Activated naive CD4-positive, alpha-beta T cell treated with anti-CD3 and anti-CD28 coated beads for 36 hours (primary cell): ENCODE measurements at regions of chr7 and their contacts with region 1.

Region 1: DNA sequence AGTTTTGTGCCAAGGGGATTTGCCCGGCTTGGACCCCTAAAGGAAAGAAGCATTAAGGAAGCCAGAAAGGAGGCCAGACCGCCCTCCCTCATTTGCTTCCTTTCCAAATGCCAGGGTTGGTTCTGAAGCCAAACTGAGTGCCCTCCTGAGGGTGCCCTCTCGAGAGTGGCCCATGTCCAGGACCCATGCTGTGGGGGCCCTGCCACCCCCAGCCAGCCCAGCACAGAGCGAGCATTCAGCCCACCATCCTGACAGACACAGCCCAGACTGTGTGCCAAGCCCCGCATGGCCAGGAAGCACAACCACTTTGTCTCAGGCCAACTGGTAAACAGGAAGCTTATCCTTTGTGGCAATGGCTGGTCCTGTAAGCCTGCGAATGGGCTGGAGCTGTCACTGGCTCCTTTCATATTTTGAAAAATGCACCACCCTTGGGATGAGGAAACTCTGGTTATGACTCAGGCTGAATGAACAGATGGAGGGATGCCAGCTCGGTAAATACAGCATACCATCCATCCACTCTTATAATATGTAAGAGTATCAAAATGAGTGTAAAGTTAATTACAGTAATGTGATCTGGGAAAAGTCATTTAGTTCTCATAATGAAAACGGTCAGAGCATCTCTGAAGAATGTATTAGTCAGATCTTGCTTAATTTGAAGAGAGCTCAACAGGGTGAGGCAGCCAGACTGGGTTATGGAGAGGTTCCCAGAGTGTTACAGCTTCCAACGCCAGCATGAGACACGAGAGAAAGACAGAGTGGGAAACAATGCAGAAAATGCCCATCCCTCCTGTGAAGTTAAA is 65.0 kb downstream of the STK17A start:
- DNase-seq: peak; percentile 87
- H3K4me3 Mint-ChIP-seq: peak overlapping the region; percentile 62
- H3K27ac Mint-ChIP-seq: peak overlapping the region; percentile 98
- H3K4me1 Mint-ChIP-seq: peaks cover 94% of the 10 kb centered on the region
- H3K27me3 Mint-ChIP-seq: no peaks in the 10 kb centered on the region

Region 2: DNA sequence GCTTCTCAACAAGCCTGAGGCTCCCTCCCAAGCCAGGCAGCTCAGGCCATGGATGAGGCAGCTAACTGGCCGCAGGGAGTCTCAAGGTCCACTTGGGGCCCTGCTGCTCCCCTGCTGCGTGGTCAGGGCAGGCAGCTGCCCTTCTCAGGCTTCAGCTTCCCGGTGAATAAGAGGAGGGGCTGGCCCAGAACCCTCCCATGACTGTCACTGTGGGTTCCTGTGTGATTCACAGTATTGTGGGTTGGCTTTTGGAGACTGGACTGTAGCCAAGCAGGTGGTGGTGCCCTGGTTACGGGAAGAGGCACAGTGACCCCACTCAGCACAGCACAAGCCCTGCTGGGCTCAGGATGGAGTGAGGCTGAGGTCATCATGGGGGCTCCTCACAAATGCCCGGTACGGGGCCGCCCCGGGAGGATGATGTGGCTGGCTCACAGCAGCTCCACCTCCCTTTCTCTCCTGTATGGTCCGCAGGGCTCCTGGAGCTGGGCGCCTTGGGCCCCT is 345.6 kb before region 1 on chr7:
- CTCF ChIA-PET with region 1: no interaction called
- intact Hi-C with region 1: loop called (anchors 5 kb)
- DNase-seq: peak; percentile 73
- H3K4me3 Mint-ChIP-seq: no peak overlapping the region
- H3K27ac Mint-ChIP-seq: no peak overlapping the region
- H3K4me1 Mint-ChIP-seq: peaks cover 36% of the 10 kb centered on the region
- H3K27me3 Mint-ChIP-seq: no peaks in the 10 kb centered on the region

Region 3: DNA sequence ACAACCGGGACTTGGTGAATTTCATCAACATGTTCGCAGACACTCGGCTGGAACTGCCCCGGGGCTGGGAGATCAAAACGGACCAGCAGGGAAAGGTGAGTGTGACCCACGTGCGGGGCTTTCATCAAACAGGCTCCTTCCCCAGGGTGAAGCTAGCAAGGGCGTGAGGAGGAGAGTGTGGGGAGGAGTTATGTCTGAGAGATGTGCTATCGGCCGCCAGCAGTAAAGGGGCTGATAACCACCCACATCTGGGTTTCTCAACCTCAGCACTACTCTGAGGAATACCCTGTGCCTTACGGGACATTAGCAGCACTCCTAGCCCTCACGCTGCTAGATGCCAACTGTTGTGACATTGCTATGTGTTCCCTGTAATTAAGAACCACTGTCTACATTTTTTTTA is 178.9 kb before region 1 on chr7:
- CTCF ChIA-PET with region 1: no interaction called
- intact Hi-C with region 1: no loop called
- DNase-seq: no peak
- H3K4me3 Mint-ChIP-seq: no peak overlapping the region
- H3K27ac Mint-ChIP-seq: no peak overlapping the region
- H3K4me1 Mint-ChIP-seq: peaks cover 7% of the 10 kb centered on the region
- H3K27me3 Mint-ChIP-seq: no peaks in the 10 kb centered on the region

Region 4: DNA sequence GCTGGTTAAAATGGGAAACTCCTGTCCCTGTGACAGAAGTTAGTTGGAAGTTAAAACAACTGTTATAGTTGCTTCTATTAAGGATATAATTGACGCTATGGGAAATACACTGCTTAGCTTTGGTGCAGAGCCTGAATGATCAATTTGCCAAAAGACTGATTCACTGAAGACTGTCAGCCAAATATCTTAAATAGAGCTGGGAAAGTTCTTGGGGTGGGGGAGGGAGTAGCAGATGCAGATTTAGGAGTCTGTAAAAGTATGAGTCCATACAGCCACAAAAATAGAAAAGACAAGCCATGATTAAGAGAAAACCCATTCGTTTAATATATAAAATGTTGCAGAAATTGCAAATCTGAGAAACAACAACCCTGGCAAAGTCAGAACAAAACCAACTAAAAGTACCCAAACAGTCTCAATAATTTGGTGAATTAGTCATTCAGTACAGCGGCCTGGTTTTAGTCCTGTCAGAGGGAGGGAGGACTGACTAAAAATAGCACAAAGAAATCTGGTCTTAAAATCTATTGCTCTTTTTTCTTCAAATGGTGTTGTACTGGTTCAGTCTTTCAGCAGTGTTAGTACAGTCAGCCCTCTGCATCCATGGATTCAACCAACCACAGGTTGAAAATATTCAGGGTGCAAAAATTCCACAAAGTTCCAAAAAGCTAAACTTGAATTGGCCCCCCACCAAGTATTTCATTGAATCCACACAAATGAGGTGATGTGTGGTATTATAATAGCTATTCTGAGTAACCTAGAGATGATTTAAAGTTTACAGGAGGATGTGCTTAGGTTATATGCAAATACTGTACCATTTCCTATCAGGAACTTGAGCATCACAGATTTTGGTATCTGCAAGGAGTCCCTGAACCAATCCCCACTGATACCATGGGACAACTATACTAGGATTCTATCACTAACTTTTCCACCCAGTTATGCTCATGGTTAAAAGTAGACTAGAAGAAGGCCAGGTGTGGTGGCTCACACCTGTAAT is 35.0 kb before region 1 on chr7:
- CTCF ChIA-PET with region 1: interaction called, 5 read pairs
- intact Hi-C with region 1: loop called (anchors 1 kb)
- DNase-seq: peak; percentile 54
- H3K4me3 Mint-ChIP-seq: peak overlapping the region; percentile 6
- H3K27ac Mint-ChIP-seq: peak overlapping the region; percentile 77
- H3K4me1 Mint-ChIP-seq: peaks cover 72% of the 10 kb centered on the region
- H3K27me3 Mint-ChIP-seq: no peaks in the 10 kb centered on the region

Region 5: DNA sequence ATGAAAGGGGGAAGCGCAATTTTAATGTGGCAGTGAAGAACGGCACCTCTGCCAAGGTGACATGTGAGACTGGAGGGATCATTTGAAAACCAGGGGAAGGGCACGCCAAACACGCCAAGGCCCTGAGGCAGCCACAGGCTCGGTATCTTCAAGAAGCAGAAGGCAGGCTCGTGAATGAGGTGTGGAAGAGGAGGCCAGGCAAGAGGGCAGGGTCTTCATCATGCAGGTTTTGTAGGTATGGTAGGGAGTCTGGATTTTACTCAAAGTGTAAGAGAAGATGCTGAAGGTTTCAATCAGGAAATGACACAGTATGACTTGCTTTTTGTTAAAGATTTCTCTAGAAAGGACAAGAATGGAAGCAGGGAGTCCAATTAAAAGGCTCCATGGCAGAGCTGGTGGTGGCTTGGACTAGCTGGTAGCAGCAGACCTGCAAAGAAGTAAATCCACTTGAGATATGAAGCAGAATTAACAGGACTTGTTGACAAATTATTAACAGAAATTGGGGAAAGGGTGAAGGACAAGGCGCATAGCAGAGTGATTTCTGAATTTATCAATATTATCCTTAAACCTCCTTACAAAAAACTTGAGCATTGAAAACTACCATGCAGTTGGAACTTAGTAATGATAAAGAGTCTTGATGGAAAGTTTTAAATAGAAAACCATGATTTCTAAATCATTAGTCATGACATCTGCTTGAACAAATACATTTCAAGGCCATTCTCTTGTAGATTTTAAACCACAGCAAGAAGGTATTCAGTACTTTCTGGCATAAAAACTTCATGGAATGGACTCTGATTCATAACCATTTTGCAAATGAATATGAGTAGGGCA is 11.1 kb after region 1 on chr7:
- CTCF ChIA-PET with region 1: interaction called, 6 read pairs
- intact Hi-C with region 1: loop called (anchors 1 kb)
- DNase-seq: peak; percentile 74
- H3K4me3 Mint-ChIP-seq: peak overlapping the region; percentile 28
- H3K27ac Mint-ChIP-seq: peak overlapping the region; percentile 96
- H3K4me1 Mint-ChIP-seq: peaks cover 65% of the 10 kb centered on the region
- H3K27me3 Mint-ChIP-seq: no peaks in the 10 kb centered on the region

Region 6: DNA sequence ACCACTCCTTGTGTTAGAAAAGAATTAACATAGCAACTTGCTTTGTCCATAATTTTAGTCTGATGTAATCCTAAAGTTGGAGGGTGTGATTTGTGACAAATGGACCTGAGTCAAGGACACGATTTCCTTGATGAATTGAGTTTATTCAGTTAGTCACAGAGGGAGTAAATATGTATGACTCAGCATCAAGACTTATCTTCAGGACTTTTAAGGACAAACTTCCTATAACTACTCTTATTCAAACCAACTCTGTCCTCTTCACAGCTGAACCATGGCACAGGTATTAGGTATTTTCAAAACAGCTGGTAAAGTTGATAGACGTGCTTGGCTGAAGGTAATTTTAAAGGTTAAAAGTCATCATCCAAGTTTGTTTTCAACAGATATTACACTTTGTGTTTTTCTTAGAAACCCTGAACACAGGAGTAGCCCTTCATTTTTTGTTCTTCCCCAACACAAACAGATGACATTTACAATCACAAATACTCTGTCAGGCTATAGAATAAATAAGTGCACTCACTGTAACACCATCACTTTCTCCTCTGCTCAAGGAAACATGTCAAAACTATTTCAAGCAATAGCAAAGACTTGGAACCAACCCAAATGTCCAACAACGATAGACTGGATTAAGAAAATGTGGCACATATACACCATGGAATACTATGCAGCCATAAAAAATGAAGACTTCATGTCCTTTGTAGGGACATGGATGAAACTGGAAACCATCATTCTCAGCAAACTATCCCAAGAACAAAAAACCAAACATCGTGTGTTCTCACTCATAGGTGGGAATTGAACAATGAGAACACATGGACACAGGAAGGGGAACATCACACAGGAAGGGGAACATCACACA is 26.9 kb after region 1 on chr7:
- CTCF ChIA-PET with region 1: interaction called, 7 read pairs
- intact Hi-C with region 1: loop called (anchors 1 kb)
- DNase-seq: no peak
- H3K4me3 Mint-ChIP-seq: no peak overlapping the region
- H3K27ac Mint-ChIP-seq: peak overlapping the region; percentile 30
- H3K4me1 Mint-ChIP-seq: peaks cover 85% of the 10 kb centered on the region
- H3K27me3 Mint-ChIP-seq: no peaks in the 10 kb centered on the region